ENCODE measurements at regions of chr2 and their contacts with region 1.

Region 1: GRCh38 chr2:198697218-198697617 is 760.5 kb downstream of the SATB2 start:
- DNase-seq: peak in 1 of 3 donors; percentile 42
- ATAC-seq: peak; percentile 84
- H3K4me3 ChIP-seq: no peak overlapping the region
- H3K4me1 ChIP-seq: peaks cover 13% of the 10 kb centered on the region
- CTCF ChIP-seq: no peak

Region 2: GRCh38 chr2:198545411-198545810 is 151.8 kb before region 1 on chr2:
- intact Hi-C with region 1: no loop called
- DNase-seq: no peak
- ATAC-seq: no peak
- H3K4me3 ChIP-seq: no peak overlapping the region
- H3K4me1 ChIP-seq: no peaks in the 10 kb centered on the region
- CTCF ChIP-seq: no peak

Region 3: GRCh38 chr2:198767694-198768093 is 70.5 kb after region 1 on chr2:
- intact Hi-C with region 1: loop called in 1 of 2 experiments (anchors 5 kb)
- DNase-seq: peak; percentile 49 to 55 (median 51)
- ATAC-seq: peak; percentile 58
- H3K4me3 ChIP-seq: no peak overlapping the region
- H3K4me1 ChIP-seq: peaks cover 9% of the 10 kb centered on the region
- CTCF ChIP-seq: no peak

Region 4: GRCh38 chr2:198811198-198811597 is 114.0 kb after region 1 on chr2:
- intact Hi-C with region 1: no loop called
- DNase-seq: no peak
- ATAC-seq: peak; percentile 62
- H3K4me3 ChIP-seq: no peak overlapping the region
- H3K4me1 ChIP-seq: no peaks in the 10 kb centered on the region
- CTCF ChIP-seq: no peak

Region 5: DNA sequence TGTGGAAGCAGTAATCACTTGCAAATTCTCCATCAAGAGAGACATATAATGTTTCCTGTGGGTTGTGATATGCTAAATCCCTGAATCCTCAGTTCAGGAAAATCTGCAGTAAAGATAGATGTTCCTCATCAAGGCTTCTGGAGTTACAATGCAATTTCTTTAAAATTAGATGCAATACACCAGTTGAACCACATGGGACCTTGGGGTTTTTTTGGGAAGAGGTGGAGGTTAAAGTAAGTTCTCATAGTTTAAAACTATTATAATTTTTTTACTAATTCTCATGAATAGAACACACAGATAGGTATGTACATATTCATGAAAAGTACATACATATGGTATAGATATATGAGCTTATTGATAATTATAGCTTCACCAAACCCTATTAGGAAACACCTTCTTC is 264.3 kb after region 1 on chr2:
- intact Hi-C with region 1: no loop called
- DNase-seq: no peak
- ATAC-seq: no peak
- H3K4me3 ChIP-seq: no peak overlapping the region
- H3K4me1 ChIP-seq: no peaks in the 10 kb centered on the region
- CTCF ChIP-seq: no peak

Region 6: DNA sequence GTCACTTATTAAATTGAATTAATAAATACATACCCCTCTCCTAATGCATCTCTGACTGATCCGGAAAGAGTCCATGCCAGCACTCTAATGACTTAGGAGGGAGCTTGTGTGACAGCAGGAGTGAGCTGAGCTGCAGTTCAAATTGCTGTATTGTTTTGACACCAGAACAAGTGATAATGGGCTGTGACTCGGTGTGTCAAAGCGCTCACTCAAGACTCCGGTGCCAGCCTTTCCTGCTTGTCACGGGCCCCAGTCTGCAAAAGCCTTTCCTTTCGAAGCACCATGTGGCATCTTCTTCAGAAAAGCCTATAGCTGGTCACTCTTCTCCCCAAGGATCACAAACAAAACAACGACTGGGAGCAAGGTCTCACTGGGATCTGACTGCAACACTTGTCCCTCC is 717.2 kb after region 1 on chr2:
- intact Hi-C with region 1: no loop called
- DNase-seq: no peak
- ATAC-seq: no peak
- H3K4me3 ChIP-seq: no peak overlapping the region
- H3K4me1 ChIP-seq: peaks cover 28% of the 10 kb centered on the region
- CTCF ChIP-seq: no peak

Measured in mucosa of descending colon (tissue), 3 donors.